BJ (cell line): ENCODE measurements at regions of chr14 and their contacts with region 1.

Region 1: DNA sequence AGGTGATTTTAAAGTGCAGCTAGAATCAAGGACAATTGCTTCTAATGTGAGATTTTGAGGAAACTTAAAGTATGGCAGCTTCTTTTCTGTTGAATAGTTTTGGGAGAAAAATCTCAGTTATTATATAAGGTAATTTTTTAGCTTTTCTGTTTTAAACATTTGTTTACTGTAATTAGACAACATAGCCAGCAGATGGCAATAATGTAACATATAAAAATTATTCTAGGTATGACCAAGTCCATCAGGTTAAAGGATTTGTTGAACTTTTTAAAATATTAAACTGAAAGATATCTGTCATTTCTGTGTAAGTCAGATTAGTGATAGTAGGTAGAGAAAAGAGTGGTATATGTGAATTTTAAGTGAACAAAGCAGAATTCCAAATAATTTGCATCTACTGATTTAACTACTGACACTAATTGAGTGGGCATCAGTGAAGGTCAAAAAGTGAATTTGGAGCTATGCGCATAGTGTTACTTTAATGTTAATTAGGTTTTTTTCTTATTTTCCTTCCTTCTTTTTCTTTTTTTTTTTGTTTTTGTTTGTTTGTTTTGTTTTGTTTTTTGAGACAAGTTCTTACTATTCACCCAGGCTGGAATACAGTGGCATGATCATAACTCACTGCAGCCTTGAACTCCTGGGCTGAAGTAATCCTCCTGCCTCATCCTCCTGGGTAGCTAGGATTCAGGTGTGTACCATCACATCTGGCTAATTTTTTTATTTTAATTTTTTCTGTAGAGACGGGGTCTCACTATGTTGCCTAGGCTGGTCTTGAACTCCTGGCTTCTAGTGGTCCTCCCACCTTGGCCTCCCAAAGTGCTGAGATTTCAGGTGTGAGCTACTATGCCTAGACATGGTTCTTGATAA is 18.6 kb downstream of the PRORP start:
- DNase-seq: no peak
- H3K4me3 ChIP-seq: no peak overlapping the region
- H3K27me3 ChIP-seq: no peaks in the 10 kb centered on the region
- CTCF ChIP-seq: no peak

Region 2: GRCh38 chr14:34935488-34935887 is 205.5 kb before region 1 on chr14:
- CTCF ChIA-PET with region 1: no interaction called
- POLR2A ChIA-PET with region 1: no interaction called
- DNase-seq: no peak
- H3K4me3 ChIP-seq: no peak overlapping the region
- H3K27me3 ChIP-seq: no peaks in the 10 kb centered on the region
- CTCF ChIP-seq: no peak

Region 3: DNA sequence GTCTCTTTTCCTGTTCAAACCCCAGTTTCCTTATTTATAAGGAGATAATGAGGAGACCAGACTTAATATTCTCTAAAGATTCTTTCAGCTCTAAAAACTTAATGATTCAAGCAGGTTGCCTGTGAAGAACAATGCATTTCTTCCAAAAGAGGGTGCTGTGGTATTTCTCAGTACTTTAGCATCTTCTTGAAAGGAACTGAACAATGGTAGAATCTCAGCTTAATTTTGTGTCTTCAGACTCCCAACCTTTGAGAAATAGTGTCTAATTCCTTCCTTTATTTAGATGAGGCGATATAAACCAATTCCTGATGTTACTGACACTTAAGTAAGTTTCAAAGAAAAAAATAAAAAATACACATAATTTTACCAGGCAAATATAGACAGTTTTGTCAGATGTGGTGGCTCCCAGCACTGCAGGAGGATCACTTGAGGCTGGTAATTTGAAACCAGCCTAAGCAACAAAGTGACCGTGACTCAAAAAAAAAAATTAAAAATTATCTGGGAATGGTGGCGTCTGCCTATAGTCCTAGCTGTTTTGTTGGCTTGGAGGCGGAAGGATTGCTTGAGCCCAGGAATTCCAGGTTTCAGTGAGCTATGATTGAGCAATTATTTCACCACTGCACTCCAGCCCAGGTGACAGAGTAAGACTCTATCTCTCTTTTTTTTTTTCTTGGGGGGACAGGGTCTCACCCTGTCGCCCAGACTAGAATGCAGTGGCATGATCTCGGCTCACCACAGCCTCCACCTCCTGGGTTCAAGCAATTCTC is 74.3 kb after region 1 on chr14:
- CTCF ChIA-PET with region 1: interaction called, 11 read pairs
- POLR2A ChIA-PET with region 1: no interaction called
- DNase-seq: peak; percentile 29
- H3K4me3 ChIP-seq: no peak overlapping the region
- H3K27me3 ChIP-seq: no peaks in the 10 kb centered on the region
- CTCF ChIP-seq: peak; percentile 65